ENCODE measurements at regions of chr16 and their contacts with region 1.

Region 1: DNA sequence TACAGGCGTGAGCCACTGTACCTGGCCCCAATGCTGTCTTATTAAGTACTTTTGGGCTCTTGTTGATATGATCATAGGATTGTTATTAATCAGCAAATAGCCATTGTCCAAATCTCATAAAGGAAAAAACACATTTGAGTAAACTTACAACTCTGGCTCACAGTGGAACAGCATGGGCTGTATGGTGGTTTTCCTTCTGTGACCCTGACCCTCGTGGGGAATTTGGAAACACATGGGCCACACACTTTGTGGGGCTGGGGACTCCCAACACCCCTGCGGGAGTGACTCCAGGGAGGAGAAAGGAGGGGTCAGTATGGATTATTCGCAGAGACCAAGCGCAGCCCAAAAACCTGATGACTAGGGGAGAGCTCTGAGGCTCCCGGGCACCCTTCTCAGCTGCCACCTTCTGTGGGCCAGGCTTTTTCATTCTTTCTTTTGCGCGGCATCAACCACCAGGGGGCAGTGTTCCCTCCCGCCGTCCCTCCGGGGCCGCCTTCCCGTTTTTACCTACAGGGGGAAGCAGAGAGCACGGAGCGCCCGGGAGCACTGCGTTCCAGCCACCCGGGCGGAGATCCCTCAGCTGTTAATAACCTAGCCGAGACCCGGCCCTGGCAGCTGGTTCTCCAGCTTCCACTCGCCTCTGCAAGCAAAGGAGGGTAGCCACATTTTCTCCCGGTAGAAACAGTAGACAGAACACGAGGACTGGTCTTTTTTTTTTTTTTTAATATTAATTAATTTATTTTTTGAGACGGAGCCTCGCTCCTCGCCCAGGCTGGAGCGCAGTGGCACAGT is 9.7 kb downstream of the TSNAXIP1 start:
- H3K4me3 Mint-ChIP-seq: no peak overlapping the region
- H3K27ac Mint-ChIP-seq: no peak overlapping the region
- H3K4me1 Mint-ChIP-seq: peaks cover 5% of the 10 kb centered on the region
- H3K27me3 Mint-ChIP-seq: no peaks in the 10 kb centered on the region

Region 2: DNA sequence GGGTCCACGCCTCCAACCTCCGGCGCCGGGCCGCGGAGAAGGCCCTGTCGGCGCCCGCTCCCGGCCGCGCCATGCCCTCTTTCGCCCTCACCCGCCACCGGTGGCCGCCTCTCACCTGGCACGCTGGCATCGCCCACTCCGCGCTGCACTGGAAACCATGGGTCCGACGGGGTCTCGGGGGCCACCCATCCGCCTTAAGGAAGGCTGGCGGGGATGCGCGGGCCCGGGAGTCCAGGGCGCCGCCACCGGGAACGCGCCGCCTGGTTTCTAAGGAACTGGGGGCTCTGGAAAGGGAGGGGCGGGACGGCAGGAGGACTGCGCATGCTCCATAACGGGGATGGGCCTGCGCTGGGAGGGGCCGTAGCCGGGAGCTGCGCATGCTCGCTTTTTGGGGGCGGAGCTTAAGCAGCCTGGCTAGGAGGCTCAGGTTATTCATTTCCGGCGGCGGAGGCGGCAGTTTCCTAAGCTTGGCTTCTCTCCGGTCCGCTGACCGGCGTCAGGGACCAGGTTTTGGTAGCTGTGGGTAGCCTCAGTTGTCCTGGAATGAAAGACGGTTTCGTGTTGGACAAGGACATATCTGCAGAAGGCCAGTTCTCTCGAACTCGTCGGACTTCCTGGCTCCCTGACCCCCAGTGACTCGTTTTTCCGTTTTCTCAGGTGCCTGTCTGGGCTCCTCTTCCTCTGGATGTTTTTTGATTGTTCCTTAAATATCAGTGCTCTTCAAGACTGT is 97.2 kb before region 1 on chr16 and contains the start of gene GFOD2:
- intact Hi-C with region 1: no loop called
- H3K4me3 Mint-ChIP-seq: peak within 1 kb of the TSS; percentile 98
- H3K27ac Mint-ChIP-seq: peak within 1 kb of the TSS; percentile 96
- H3K4me1 Mint-ChIP-seq: peaks cover 37% of the 10 kb centered on the region
- H3K27me3 Mint-ChIP-seq: no peaks in the 10 kb centered on the region

Region 3: GRCh38 chr16:67865316-67865715 is 48.9 kb after region 1 on chr16:
- intact Hi-C with region 1: loop called (anchors 1 kb)
- H3K4me3 Mint-ChIP-seq: no peak overlapping the region
- H3K27ac Mint-ChIP-seq: no peak overlapping the region
- H3K4me1 Mint-ChIP-seq: peaks cover 24% of the 10 kb centered on the region
- H3K27me3 Mint-ChIP-seq: no peaks in the 10 kb centered on the region

Region 4: GRCh38 chr16:67879936-67880335 is 63.5 kb after region 1 on chr16:
- intact Hi-C with region 1: no loop called
- H3K4me3 Mint-ChIP-seq: no peak overlapping the region
- H3K27ac Mint-ChIP-seq: no peak overlapping the region
- H3K4me1 Mint-ChIP-seq: peaks cover 32% of the 10 kb centered on the region
- H3K27me3 Mint-ChIP-seq: no peaks in the 10 kb centered on the region

Region 5: GRCh38 chr16:67907397-67908180 is 91.2 kb after region 1 on chr16:
- intact Hi-C with region 1: no loop called
- H3K4me3 Mint-ChIP-seq: no peak overlapping the region
- H3K27ac Mint-ChIP-seq: no peak overlapping the region
- H3K4me1 Mint-ChIP-seq: peaks cover 4% of the 10 kb centered on the region
- H3K27me3 Mint-ChIP-seq: no peaks in the 10 kb centered on the region

Region 6: GRCh38 chr16:67935402-67936123 is 119.1 kb after region 1 on chr16:
- intact Hi-C with region 1: loop called (anchors 5 kb)
- H3K4me3 Mint-ChIP-seq: peak overlapping the region; percentile 83
- H3K27ac Mint-ChIP-seq: peak overlapping the region; percentile 91
- H3K4me1 Mint-ChIP-seq: peaks cover 37% of the 10 kb centered on the region
- H3K27me3 Mint-ChIP-seq: no peaks in the 10 kb centered on the region

Region 7: DNA sequence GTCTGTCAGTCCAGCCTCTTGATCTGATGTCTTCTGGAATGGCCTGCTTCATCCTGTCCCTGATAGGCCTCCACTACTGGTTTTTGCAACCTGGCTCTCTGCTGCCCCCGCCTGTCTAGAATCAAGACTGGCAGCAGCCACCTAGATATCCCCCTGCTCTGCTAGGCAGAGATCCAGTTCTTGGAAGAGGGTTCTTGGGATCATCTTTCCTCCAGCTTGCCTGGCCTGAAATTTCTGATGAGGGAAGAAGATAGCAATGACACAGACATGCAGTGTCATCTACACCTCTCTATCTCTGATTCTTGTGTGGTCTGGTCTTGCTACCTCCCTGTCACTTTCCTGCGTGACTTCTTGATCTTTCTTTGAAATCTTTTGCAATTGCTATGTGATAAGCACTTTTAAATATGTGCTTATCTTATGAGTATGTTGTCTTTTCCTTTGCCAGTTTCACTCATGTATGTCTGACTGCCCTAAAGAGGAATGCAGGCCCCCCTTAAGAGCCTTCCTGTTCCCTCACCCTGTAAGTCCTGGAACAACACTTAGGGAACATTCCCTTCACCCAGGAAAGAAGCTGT is 248.4 kb after region 1 on chr16:
- intact Hi-C with region 1: loop called (anchors 10 kb)
- H3K4me3 Mint-ChIP-seq: no peak overlapping the region
- H3K27ac Mint-ChIP-seq: peak overlapping the region; percentile 59
- H3K4me1 Mint-ChIP-seq: peaks cover 40% of the 10 kb centered on the region
- H3K27me3 Mint-ChIP-seq: no peaks in the 10 kb centered on the region

Region 8: GRCh38 chr16:68244903-68245853 is 428.7 kb after region 1 on chr16 and contains the start of gene PLA2G15:
- intact Hi-C with region 1: no loop called
- H3K4me3 Mint-ChIP-seq: peak within 1 kb of the TSS; percentile 95
- H3K27ac Mint-ChIP-seq: peak within 1 kb of the TSS; percentile 88
- H3K4me1 Mint-ChIP-seq: peaks cover 64% of the 10 kb centered on the region
- H3K27me3 Mint-ChIP-seq: no peaks in the 10 kb centered on the region